ENCODE measurements at regions of chr3 and their contacts with region 1.

Region 1: GRCh38 chr3:50272911-50273693 is 4.2 kb downstream of the SEMA3B start:
- DNase-seq: peak; percentile 83 to 94 (median 86)
- ATAC-seq: peak; percentile 39 to 77 (median 61)
- H3K4me3 ChIP-seq: peak overlapping the region in 11 of 12 donors; percentile 19 to 54 (median 39)
- H3K27ac ChIP-seq: peak overlapping the region in 6 of 12 donors; percentile 9 to 51 (median 30)
- H3K4me1 ChIP-seq: peaks cover 0 to 47% (median 26%) of the 10 kb centered on the region in 12 donors
- H3K27me3 ChIP-seq: peaks cover 0 to 38% (median 6%) of the 10 kb centered on the region in 9 donors
- CTCF ChIP-seq: peak; percentile 96 to 99 (median 98)
- POLR2A ChIP-seq: no peak

Region 2: GRCh38 chr3:50121416-50122032 is 151.6 kb before region 1 on chr3:
- intact Hi-C with region 1: loop called in 9 of 10 experiments (anchors 5 to 10 kb)
- DNase-seq: peak; percentile 68 to 77 (median 72)
- ATAC-seq: peak; percentile 71 to 88 (median 84)
- H3K4me3 ChIP-seq: no peak overlapping the region
- H3K27ac ChIP-seq: no peak overlapping the region
- H3K4me1 ChIP-seq: peaks cover 0 to 22% (median 2%) of the 10 kb centered on the region in 12 donors
- H3K27me3 ChIP-seq: no peaks in the 10 kb centered on the region
- CTCF ChIP-seq: peak; percentile 76 to 89 (median 84)
- POLR2A ChIP-seq: peak in 1 of 2 donors; percentile 13

Region 3: DNA sequence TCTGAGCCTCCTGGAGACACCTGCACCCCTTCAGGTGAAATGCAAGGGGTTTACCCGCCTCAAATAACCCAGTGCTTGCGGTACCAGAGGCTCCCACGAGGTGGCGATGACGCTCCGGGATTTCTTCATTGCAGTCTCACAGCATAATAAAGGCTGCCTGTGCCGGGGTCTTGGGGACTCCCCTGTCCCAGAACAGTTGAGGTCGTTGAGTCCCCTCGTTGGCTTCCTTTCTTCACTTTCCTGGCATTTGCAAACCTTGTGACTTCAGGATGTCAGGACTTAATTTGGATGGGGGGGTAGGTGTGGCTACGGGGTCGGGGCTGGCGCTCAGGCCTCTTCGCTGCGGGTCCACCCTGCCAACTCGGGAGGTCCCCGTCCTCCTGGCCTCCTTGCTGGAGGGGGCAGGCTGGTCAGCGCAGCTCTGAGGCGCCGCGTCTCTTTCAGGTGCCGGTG is 80.4 kb before region 1 on chr3:
- intact Hi-C with region 1: loop called (anchors 1 to 2 kb)
- DNase-seq: peak in 4 of 5 donors; percentile 44 to 64 (median 60)
- ATAC-seq: peak in 2 of 4 donors; percentile 17 to 28
- H3K4me3 ChIP-seq: no peak overlapping the region
- H3K27ac ChIP-seq: no peak overlapping the region
- H3K4me1 ChIP-seq: peaks cover 3 to 29% (median 14%) of the 10 kb centered on the region in 12 donors
- H3K27me3 ChIP-seq: peaks cover 12 to 35% (median 21%) of the 10 kb centered on the region in 9 donors
- CTCF ChIP-seq: peak; percentile 82 to 94 (median 88)
- POLR2A ChIP-seq: no peak

Region 4: GRCh38 chr3:50227390-50228183 is 45.5 kb before region 1 on chr3:
- intact Hi-C with region 1: loop called (anchors 1 to 5 kb)
- DNase-seq: peak; percentile 91 to 97 (median 93)
- ATAC-seq: peak; percentile 87 to 94 (median 92)
- H3K4me3 ChIP-seq: peak overlapping the region; percentile 49 to 91 (median 69)
- H3K27ac ChIP-seq: peak overlapping the region in 11 of 12 donors; percentile 65 to 87 (median 76)
- H3K4me1 ChIP-seq: peaks cover 4 to 54% (median 17%) of the 10 kb centered on the region in 12 donors
- H3K27me3 ChIP-seq: no peaks in the 10 kb centered on the region
- CTCF ChIP-seq: peak; percentile 72 to 98 (median 94)
- POLR2A ChIP-seq: peak in 1 of 2 donors; percentile 45

Region 5: GRCh38 chr3:50245831-50246516 is 27.1 kb before region 1 on chr3:
- intact Hi-C with region 1: loop called in 1 of 10 experiments (anchors 1 kb)
- DNase-seq: peak; percentile 91 to 95 (median 93)
- ATAC-seq: peak; percentile 62 to 77 (median 74)
- H3K4me3 ChIP-seq: peak overlapping the region; percentile 6 to 58 (median 49)
- H3K27ac ChIP-seq: peak overlapping the region; percentile 85 to 99 (median 94)
- H3K4me1 ChIP-seq: peaks cover 34 to 100% (median 96%) of the 10 kb centered on the region in 12 donors
- H3K27me3 ChIP-seq: no peaks in the 10 kb centered on the region
- CTCF ChIP-seq: peak; percentile 95 to 99 (median 98)
- POLR2A ChIP-seq: no peak

Region 6: GRCh38 chr3:50260027-50260941 is 12.8 kb before region 1 on chr3:
- intact Hi-C with region 1: loop called in 1 of 10 experiments (anchors 1 kb)
- DNase-seq: peak; percentile 95 to 97 (median 96)
- ATAC-seq: peak; percentile 56 to 89 (median 80)
- H3K4me3 ChIP-seq: peak overlapping the region; percentile 50 to 79 (median 72)
- H3K27ac ChIP-seq: peak overlapping the region; percentile 88 to 100 (median 100)
- H3K4me1 ChIP-seq: peaks cover 0 to 65% (median 47%) of the 10 kb centered on the region in 12 donors
- H3K27me3 ChIP-seq: no peaks in the 10 kb centered on the region
- CTCF ChIP-seq: peak; percentile 95 to 99 (median 98)
- POLR2A ChIP-seq: peak in 1 of 2 donors; percentile 71

Region 7: DNA sequence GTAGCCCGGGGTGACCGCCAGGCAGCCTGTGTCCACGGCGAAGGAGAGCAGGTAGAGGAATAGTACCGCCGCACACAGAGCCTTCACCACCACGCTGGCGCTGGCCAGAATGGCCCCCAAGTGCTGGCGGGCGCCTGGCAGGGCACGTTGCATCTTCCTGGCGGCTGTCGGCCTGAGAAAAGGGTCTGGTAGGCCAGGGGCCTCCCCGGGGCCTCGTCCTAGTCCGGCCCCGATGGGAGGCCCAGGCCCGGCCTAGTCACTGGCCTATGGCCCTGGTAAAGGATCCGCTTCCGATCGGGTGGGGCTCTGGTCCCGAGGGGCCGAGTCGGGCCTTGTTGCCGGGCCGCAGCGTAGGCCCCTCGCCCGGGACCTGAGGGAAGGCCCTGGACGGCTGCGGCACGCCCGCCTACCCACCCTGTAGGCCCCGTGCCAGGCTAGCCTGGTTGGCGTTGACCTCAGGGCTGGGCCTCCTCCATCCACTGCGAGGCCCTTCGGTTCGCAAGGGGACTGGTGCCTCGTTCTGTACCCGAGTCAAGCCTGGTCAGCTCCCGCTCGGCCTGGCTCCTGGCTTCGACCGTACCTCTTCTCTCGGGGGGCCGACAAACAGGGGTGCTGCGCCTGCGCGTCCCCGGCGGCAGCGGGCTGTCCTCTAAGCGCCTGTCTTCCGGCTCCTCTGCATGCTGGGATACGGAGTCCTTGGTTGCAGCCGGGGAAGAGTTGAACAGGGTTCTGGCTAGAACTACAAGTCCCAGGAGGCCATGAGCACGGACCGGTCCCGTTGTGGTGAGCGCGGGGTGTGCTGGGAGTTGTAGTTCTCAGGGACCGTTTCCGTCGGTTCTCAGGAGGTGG is 86.0 kb after region 1 on chr3 and contains the start of gene TMEM115:
- intact Hi-C with region 1: no loop called
- DNase-seq: peak; percentile 96 to 99 (median 99)
- ATAC-seq: peak; percentile 97 to 99 (median 98)
- H3K4me3 ChIP-seq: peak within 1 kb of the TSS; percentile 60 to 97 (median 80)
- H3K27ac ChIP-seq: peak within 1 kb of the TSS; percentile 77 to 97 (median 90)
- H3K4me1 ChIP-seq: peaks cover 19 to 51% (median 40%) of the 10 kb centered on the region in 12 donors
- H3K27me3 ChIP-seq: no peaks in the 10 kb centered on the region
- CTCF ChIP-seq: no peak
- POLR2A ChIP-seq: peak in 1 of 2 donors; percentile 73
- total RNA-seq, gene TMEM115: 20.5 to 56.4 (median 28.9) TPM

Measured in heart left ventricle (tissue), 16 donors.